H1 (cell line): ENCODE measurements at regions of chr3 and their contacts with region 1.

Region 1: GRCh38 chr3:28334552-28334951 is 14.0 kb upstream of the ZCWPW2 start:
- DNase-seq: no peak
- H3K4me3 ChIP-seq: no peak overlapping the region
- H3K27ac ChIP-seq: no peak overlapping the region
- H3K4me1 ChIP-seq: no peaks in the 10 kb centered on the region
- H3K27me3 ChIP-seq: no peaks in the 10 kb centered on the region
- CTCF ChIP-seq: no peak
- EP300 ChIP-seq: no peak
- POLR2A ChIP-seq: no peak
- RAD21 ChIP-seq: no peak

Region 2: DNA sequence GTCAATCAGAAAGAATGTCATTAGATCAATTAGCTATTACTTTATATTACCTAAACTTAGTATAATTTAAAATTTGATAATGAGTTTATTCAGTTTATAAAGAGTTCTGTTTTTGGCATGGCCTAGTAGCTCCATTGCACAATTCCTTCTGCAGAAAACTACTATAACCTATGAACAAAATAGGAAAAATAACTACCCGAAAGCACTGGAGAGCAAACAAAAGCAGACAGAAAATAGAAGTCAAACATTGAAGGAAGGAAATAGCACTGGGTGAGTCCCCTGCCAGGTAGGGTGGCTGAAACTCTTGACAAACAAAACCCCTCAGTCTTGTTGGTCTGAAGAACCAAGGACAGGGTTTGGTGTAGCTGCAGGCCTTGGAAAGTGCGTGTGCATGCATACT is 55.6 kb before region 1 on chr3:
- CTCF ChIA-PET with region 1: no interaction called
- POLR2A ChIA-PET with region 1: no interaction called
- DNase-seq: no peak
- H3K4me3 ChIP-seq: no peak overlapping the region
- H3K27ac ChIP-seq: no peak overlapping the region
- H3K4me1 ChIP-seq: no peaks in the 10 kb centered on the region
- H3K27me3 ChIP-seq: no peaks in the 10 kb centered on the region
- CTCF ChIP-seq: no peak
- EP300 ChIP-seq: no peak
- POLR2A ChIP-seq: no peak
- RAD21 ChIP-seq: no peak

Region 3: GRCh38 chr3:28348629-28349483 is 14.3 kb after region 1 on chr3 and contains the starts of genes AZI2 and ZCWPW2:
- CTCF ChIA-PET with region 1: interaction called, 8 read pairs
- POLR2A ChIA-PET with region 1: interaction called, 10 read pairs
- DNase-seq: peak; percentile 80 to 93
- H3K4me3 ChIP-seq: peak within 1 kb of the TSS; percentile 81 to 96 (median 84)
- H3K27ac ChIP-seq: peak within 1 kb of the TSS; percentile 97
- H3K4me1 ChIP-seq: no peaks in the 10 kb centered on the region; a peak in 2 of 7 replicates
- H3K27me3 ChIP-seq: no peaks in the 10 kb centered on the region
- CTCF ChIP-seq: peak; percentile 8 to 30 (median 25)
- EP300 ChIP-seq: no peak
- POLR2A ChIP-seq: peak; percentile 61 to 89
- RAD21 ChIP-seq: peak; percentile 21 to 23; a peak in 3 of 4 replicates
- total RNA-seq, gene AZI2: 36.1 and 39.2 TPM in 2 replicates
- total RNA-seq, gene ZCWPW2: 0.33 and 0.39 TPM in 2 replicates